IMR-90 (cell line): ENCODE measurements at regions of chrX and their contacts with region 1.

Region 1: DNA sequence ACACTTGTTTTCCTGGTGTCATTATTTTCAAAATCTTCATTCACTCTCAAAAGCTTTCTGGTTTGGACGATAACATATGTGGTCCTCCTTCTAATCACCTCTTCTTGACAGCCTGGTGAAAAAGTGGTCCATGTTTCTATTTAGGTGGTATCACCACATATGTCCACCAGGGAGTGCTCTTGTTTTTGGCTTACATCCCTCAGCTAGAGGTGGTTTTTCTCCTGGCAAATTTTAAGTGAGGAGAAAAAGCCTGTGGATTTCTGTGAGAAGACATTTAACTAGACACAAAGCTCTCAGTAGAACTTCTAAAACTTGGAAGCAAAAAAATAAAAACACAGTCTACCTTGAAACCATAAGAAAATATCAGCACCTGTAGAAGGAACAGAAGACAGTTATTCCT is 58.0 kb upstream of the FRMPD4 start:
- DNase-seq: peak; percentile 55
- ATAC-seq: no peak
- H3K4me3 ChIP-seq: no peak overlapping the region
- H3K27ac ChIP-seq: no peak overlapping the region
- H3K4me1 ChIP-seq: no peaks in the 10 kb centered on the region
- H3K27me3 ChIP-seq: peaks cover 2% of the 10 kb centered on the region; the same call in 1 of the 2 replicates
- CTCF ChIP-seq: peak; percentile 66
- POLR2A ChIP-seq: no peak
- RAD21 ChIP-seq: peak; percentile 80

Region 2: DNA sequence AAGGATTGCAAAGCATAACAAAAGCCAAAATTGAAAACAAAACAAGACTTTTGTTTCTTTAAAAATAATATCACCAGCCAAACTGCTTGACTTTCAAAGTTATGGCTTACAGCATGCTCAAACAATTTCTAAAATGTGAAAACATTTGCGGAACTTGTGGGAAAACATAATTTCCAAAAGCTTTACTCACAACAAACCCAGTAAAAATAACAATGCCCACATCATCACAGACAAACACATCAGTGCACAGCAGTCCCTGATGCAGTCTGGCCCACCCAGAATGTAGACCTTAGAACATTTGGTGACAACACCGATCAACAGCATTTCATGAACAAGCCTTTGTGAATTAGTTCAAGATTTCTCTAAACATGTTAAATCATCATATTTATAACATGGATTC is 513.5 kb before region 1 on chrX:
- CTCF ChIA-PET with region 1: no interaction called
- POLR2A ChIA-PET with region 1: no interaction called
- dilution Hi-C with region 1: no loop called
- in situ Hi-C with region 1: no loop called
- intact Hi-C with region 1: no loop called
- DNase-seq: no peak
- ATAC-seq: no peak
- H3K4me3 ChIP-seq: no peak overlapping the region
- H3K27ac ChIP-seq: no peak overlapping the region
- H3K4me1 ChIP-seq: no peaks in the 10 kb centered on the region
- H3K27me3 ChIP-seq: no peaks in the 10 kb centered on the region
- CTCF ChIP-seq: no peak
- POLR2A ChIP-seq: no peak
- RAD21 ChIP-seq: no peak

Region 3: GRCh38 chrX:11944501-11944900 is 135.8 kb before region 1 on chrX:
- CTCF ChIA-PET with region 1: interaction called, 4 read pairs
- POLR2A ChIA-PET with region 1: no interaction called
- dilution Hi-C with region 1: no loop called
- in situ Hi-C with region 1: no loop called
- intact Hi-C with region 1: loop called (anchors 5 kb)
- DNase-seq: peak; percentile 64
- ATAC-seq: peak; percentile 78
- H3K4me3 ChIP-seq: no peak overlapping the region
- H3K27ac ChIP-seq: no peak overlapping the region
- H3K4me1 ChIP-seq: no peaks in the 10 kb centered on the region
- H3K27me3 ChIP-seq: no peaks in the 10 kb centered on the region
- CTCF ChIP-seq: peak; percentile 54
- POLR2A ChIP-seq: no peak
- RAD21 ChIP-seq: peak; percentile 63

Region 4: GRCh38 chrX:12149670-12150407 is 69.6 kb after region 1 on chrX:
- CTCF ChIA-PET with region 1: no interaction called
- POLR2A ChIA-PET with region 1: no interaction called
- dilution Hi-C with region 1: no loop called
- in situ Hi-C with region 1: no loop called
- intact Hi-C with region 1: no loop called
- DNase-seq: no peak
- ATAC-seq: no peak
- H3K4me3 ChIP-seq: no peak overlapping the region
- H3K27ac ChIP-seq: no peak overlapping the region
- H3K4me1 ChIP-seq: peaks cover 2% of the 10 kb centered on the region; the same call in 1 of the 2 replicates
- H3K27me3 ChIP-seq: no peaks in the 10 kb centered on the region
- CTCF ChIP-seq: no peak
- POLR2A ChIP-seq: no peak
- RAD21 ChIP-seq: no peak

Region 5: GRCh38 chrX:12329476-12329875 is 249.2 kb after region 1 on chrX:
- CTCF ChIA-PET with region 1: no interaction called
- POLR2A ChIA-PET with region 1: no interaction called
- dilution Hi-C with region 1: no loop called
- in situ Hi-C with region 1: no loop called
- intact Hi-C with region 1: loop called (anchors 10 kb)
- DNase-seq: no peak
- ATAC-seq: no peak
- H3K4me3 ChIP-seq: no peak overlapping the region
- H3K27ac ChIP-seq: no peak overlapping the region
- H3K4me1 ChIP-seq: no peaks in the 10 kb centered on the region; the same call in 1 of the 2 replicates
- H3K27me3 ChIP-seq: no peaks in the 10 kb centered on the region
- CTCF ChIP-seq: no peak
- POLR2A ChIP-seq: no peak
- RAD21 ChIP-seq: no peak

Region 6: DNA sequence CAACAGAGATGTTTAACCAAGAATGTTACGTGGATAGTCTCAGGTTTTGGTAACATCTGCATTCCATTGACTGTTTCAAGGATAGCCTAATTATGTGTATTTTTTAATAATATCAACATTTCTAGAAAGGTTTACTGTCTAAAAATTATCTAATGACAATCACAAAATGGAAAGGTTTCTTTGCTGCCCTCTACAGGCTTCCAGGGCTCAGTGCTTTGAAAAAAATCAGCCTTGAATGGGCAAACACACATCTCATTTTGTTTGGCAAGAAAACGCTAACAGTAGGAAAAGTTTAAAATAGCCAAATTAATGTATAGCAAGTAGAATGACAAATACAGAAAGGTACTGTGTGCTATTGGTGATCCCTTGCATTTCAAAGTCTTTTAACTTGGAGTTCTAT is 487.6 kb after region 1 on chrX:
- CTCF ChIA-PET with region 1: no interaction called
- POLR2A ChIA-PET with region 1: no interaction called
- dilution Hi-C with region 1: no loop called
- in situ Hi-C with region 1: no loop called
- intact Hi-C with region 1: loop called (anchors 2 kb)
- DNase-seq: peak; percentile 13
- ATAC-seq: no peak
- H3K4me3 ChIP-seq: no peak overlapping the region
- H3K27ac ChIP-seq: no peak overlapping the region
- H3K4me1 ChIP-seq: no peaks in the 10 kb centered on the region
- H3K27me3 ChIP-seq: no peaks in the 10 kb centered on the region
- CTCF ChIP-seq: peak; percentile 62
- POLR2A ChIP-seq: no peak
- RAD21 ChIP-seq: peak; percentile 49

Region 7: GRCh38 chrX:12771445-12772069 is 691.3 kb after region 1 on chrX:
- CTCF ChIA-PET with region 1: no interaction called
- POLR2A ChIA-PET with region 1: no interaction called
- dilution Hi-C with region 1: no loop called
- in situ Hi-C with region 1: no loop called
- intact Hi-C with region 1: loop called (anchors 10 kb)
- DNase-seq: peak; percentile 31
- ATAC-seq: no peak
- H3K4me3 ChIP-seq: no peak overlapping the region
- H3K27ac ChIP-seq: no peak overlapping the region
- H3K4me1 ChIP-seq: no peaks in the 10 kb centered on the region
- H3K27me3 ChIP-seq: peaks cover 6% of the 10 kb centered on the region
- CTCF ChIP-seq: peak; percentile 75
- POLR2A ChIP-seq: no peak
- RAD21 ChIP-seq: peak; percentile 32; the same call in 1 of the 2 replicates